Activated CD8-positive, alpha-beta memory T cell treated with anti-CD3 and anti-CD28 coated beads, Interleukin-2, amount 10 ng/mL, durations not matched to agents 7 days and 5 days (primary cell): ENCODE measurements at regions of chr11 and their contacts with region 1.

Region 1: DNA sequence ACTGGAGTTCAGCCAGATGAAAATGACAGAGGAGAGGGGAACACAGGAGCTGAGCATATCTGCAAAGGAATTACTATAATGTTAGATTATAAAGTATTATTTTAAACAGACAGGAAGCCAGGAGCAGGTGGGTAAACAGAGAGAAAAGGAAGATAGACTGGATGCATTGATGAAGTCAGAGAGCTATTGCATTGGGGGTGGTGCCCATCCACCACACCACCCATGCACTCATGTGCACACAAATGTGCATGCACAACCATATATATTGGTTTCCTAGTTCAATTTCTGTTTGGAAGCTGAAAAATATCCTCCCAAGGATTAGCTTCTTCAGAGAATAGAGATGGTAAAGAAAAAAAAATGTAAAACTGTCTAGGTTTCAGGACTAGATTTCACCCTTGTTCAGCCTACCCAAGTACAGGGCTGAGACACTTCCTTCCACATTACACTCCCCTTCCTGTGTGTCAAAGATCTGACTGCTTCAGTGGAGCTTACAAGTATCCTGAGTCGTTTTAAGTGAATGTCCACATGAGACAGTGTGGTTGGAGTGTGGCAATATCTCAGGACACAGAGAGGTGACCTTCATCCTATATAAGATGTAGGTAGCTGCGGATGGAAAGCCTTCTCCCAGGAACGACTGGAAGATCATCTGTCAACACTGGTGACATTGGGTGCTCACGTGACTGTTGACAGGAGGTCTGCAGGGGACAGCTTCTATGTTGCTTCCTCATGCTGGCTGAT is 12.2 kb upstream of the SMPD1 start:
- DNase-seq: no peak
- ATAC-seq: peak; percentile 79
- H3K4me3 Mint-ChIP-seq: peak overlapping the region; percentile 38
- H3K27ac Mint-ChIP-seq: peak overlapping the region; percentile 86
- H3K4me1 Mint-ChIP-seq: peaks cover 31% of the 10 kb centered on the region
- H3K27me3 Mint-ChIP-seq: no peaks in the 10 kb centered on the region

Region 2: GRCh38 chr11:6353367-6353987 is 24.6 kb before region 1 on chr11:
- CTCF ChIA-PET with region 1: interaction called, 95 read pairs
- DNase-seq: peak; percentile 70
- ATAC-seq: peak; percentile 78
- H3K4me3 Mint-ChIP-seq: no peak overlapping the region
- H3K27ac Mint-ChIP-seq: no peak overlapping the region
- H3K4me1 Mint-ChIP-seq: peaks cover 10% of the 10 kb centered on the region
- H3K27me3 Mint-ChIP-seq: no peaks in the 10 kb centered on the region

Region 3: GRCh38 chr11:6402561-6402981 is 24.5 kb after region 1 on chr11:
- CTCF ChIA-PET with region 1: interaction called, 42 read pairs
- DNase-seq: peak; percentile 96
- ATAC-seq: peak; percentile 90
- H3K4me3 Mint-ChIP-seq: peak overlapping the region; percentile 73
- H3K27ac Mint-ChIP-seq: peak overlapping the region; percentile 96
- H3K4me1 Mint-ChIP-seq: peaks cover 62% of the 10 kb centered on the region
- H3K27me3 Mint-ChIP-seq: no peaks in the 10 kb centered on the region

Region 4: DNA sequence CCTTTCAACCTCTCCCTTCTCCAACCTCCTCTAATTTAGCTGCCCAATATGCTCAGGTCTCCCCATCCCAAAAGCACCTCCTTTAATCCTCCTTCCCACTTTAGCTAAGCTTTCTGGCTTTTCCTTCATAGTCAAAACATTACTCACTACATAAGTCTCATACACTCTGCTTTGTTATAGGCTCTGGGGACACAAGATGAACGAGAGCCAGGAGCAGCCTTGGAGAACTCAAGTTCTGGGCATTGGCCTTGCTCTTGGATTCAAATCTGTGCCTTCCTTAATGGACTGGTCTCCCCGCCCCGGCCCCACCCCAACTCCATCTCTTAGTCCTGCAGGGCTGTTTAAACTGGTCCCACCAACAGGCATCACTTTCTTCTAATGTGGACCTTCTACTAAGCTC is 74.1 kb after region 1 on chr11:
- CTCF ChIA-PET with region 1: interaction called, 571 read pairs
- DNase-seq: no peak
- ATAC-seq: no peak
- H3K4me3 Mint-ChIP-seq: no peak overlapping the region
- H3K27ac Mint-ChIP-seq: no peak overlapping the region
- H3K4me1 Mint-ChIP-seq: no peaks in the 10 kb centered on the region
- H3K27me3 Mint-ChIP-seq: no peaks in the 10 kb centered on the region

Region 5: DNA sequence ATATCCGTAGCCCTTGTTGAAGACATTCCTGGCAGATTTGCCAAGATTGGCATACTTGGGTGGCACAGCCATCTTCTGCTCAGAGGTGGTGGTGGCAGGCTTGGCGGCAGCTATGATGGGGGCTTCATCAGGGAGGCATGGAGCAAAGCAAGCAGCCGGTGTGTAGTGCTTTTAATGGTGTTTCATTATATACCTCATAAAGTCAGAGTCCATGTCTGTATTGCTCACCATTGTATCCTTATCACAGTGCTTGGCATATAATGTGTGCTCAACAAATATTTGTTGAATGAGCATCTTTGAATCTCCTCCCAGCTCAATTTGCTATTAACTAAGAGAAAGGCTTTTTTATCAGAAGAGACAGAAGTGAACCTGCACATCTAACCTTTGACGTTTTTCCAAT is 111.2 kb after region 1 on chr11:
- CTCF ChIA-PET with region 1: interaction called, 39 read pairs
- DNase-seq: no peak
- ATAC-seq: no peak
- H3K4me3 Mint-ChIP-seq: no peak overlapping the region
- H3K27ac Mint-ChIP-seq: no peak overlapping the region
- H3K4me1 Mint-ChIP-seq: no peaks in the 10 kb centered on the region
- H3K27me3 Mint-ChIP-seq: no peaks in the 10 kb centered on the region

Region 6: GRCh38 chr11:6603287-6604080 is 225.4 kb after region 1 on chr11 and contains the starts of genes ILK and RRP8:
- CTCF ChIA-PET with region 1: interaction called, 10 read pairs
- DNase-seq: peak; percentile 94
- ATAC-seq: peak; percentile 78
- H3K4me3 Mint-ChIP-seq: no peak within 1 kb of the TSS
- H3K27ac Mint-ChIP-seq: no peak within 1 kb of the TSS
- H3K4me1 Mint-ChIP-seq: peaks cover 30% of the 10 kb centered on the region
- H3K27me3 Mint-ChIP-seq: no peaks in the 10 kb centered on the region
- total RNA-seq, gene ILK: 151 to 161 TPM
- total RNA-seq, gene RRP8: 25.6 to 33.1 TPM

Region 7: GRCh38 chr11:6705905-6706535 is 327.9 kb after region 1 on chr11:
- CTCF ChIA-PET with region 1: interaction called, 13 read pairs
- DNase-seq: peak; percentile 51
- ATAC-seq: peak; percentile 51
- H3K4me3 Mint-ChIP-seq: no peak overlapping the region
- H3K27ac Mint-ChIP-seq: peak overlapping the region; percentile 29
- H3K4me1 Mint-ChIP-seq: peaks cover 2% of the 10 kb centered on the region
- H3K27me3 Mint-ChIP-seq: no peaks in the 10 kb centered on the region